Psoas muscle (tissue), 8 donors: ENCODE measurements at regions of chr2 and their contacts with region 1.

Region 1: DNA sequence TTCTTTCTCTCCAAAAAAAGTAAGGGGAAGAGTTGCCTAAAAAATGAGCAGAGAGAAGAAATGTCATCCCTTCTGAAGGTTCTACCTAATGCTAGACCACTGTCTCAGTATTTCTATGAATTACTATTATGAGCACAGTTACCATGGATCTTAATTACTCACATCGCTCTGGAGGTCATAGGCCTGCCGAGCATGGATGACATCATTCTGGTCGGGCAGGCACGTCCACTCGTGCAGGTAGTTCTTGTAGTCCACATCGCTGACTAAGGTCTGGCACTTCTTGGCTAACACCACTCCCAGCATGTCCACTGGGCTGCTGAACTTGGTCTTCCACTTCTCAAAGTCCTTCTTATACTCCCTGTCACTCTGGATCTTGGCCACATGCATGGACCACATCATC is 106.9 kb downstream of the NEB start:
- DNase-seq: no peak
- ATAC-seq: peak; percentile 51 to 68 (median 62)
- H3K4me3 ChIP-seq: no peak overlapping the region
- H3K27ac ChIP-seq: peak overlapping the region; percentile 47
- H3K4me1 ChIP-seq: peaks cover 31% of the 10 kb centered on the region
- H3K27me3 ChIP-seq: no peaks in the 10 kb centered on the region
- CTCF ChIP-seq: no peak

Region 2: DNA sequence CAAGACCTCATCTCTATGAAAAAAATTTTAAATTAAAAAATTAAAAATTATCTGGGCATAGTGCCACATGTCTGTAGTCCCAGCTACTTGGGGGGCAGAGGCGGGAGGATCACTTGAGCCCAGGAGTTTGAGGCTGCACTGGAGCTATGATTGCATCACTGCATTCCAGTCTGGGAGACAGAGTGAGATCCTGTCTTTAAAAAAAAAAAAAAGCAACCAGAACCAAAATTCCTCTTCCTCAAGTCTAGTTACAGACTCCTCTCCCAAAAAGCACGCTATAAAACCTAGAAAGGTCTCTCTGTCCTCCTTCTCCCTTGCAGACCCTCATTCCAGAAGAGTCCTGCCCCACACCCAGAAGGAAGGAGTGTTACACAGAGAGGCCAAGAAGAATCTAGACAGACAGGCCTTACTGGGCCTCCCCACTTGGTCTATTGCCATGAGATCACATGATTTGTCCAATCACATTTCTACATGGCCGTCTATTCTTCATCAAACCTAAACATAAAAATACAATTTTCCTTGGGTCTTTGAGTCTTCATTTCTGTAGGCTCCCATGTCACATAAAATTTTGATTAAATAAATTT is 246.0 kb before region 1 on chr2:
- intact Hi-C with region 1: no loop called
- DNase-seq: no peak
- ATAC-seq: no peak
- H3K4me3 ChIP-seq: no peak overlapping the region
- H3K27ac ChIP-seq: no peak overlapping the region
- H3K4me1 ChIP-seq: no peaks in the 10 kb centered on the region
- H3K27me3 ChIP-seq: no peaks in the 10 kb centered on the region
- CTCF ChIP-seq: no peak

Region 3: GRCh38 chr2:151551556-151551955 is 75.8 kb before region 1 on chr2:
- intact Hi-C with region 1: loop called in 1 of 2 experiments (anchors 5 kb)
- DNase-seq: no peak
- ATAC-seq: no peak
- H3K4me3 ChIP-seq: no peak overlapping the region
- H3K27ac ChIP-seq: peak overlapping the region; percentile 43
- H3K4me1 ChIP-seq: no peaks in the 10 kb centered on the region
- H3K27me3 ChIP-seq: no peaks in the 10 kb centered on the region
- CTCF ChIP-seq: no peak

Region 4: GRCh38 chr2:151664520-151664919 is 37.2 kb after region 1 on chr2:
- intact Hi-C with region 1: loop called in 1 of 2 experiments (anchors 5 kb)
- DNase-seq: no peak
- ATAC-seq: no peak
- H3K4me3 ChIP-seq: no peak overlapping the region
- H3K27ac ChIP-seq: peak overlapping the region; percentile 30
- H3K4me1 ChIP-seq: peaks cover 29% of the 10 kb centered on the region
- H3K27me3 ChIP-seq: no peaks in the 10 kb centered on the region
- CTCF ChIP-seq: no peak

Region 5: GRCh38 chr2:151766437-151767153 is 139.2 kb after region 1 on chr2:
- intact Hi-C with region 1: no loop called
- DNase-seq: no peak
- ATAC-seq: no peak
- H3K4me3 ChIP-seq: no peak overlapping the region
- H3K27ac ChIP-seq: peak overlapping the region; percentile 83
- H3K4me1 ChIP-seq: peaks cover 47% of the 10 kb centered on the region
- H3K27me3 ChIP-seq: no peaks in the 10 kb centered on the region
- CTCF ChIP-seq: no peak

Region 6: DNA sequence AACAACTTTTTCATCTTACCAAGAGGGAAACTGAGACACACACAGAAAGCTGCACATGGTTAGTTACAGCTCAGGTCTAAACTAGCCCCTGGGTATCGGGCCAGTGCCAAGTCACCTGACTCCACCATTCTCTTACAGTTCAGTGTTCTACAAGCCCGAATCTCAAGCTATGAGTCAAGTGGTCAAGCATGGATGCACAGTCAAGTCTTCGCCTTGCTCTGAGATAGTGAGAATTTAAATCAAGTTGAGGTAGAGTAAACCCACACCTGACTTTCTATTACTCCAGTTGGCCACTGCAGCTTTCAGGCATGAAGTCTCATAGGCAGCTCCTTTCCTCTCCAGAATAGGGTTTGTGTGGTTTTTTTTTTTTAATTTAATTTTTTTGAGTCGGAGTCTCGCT is 235.3 kb after region 1 on chr2:
- intact Hi-C with region 1: no loop called
- DNase-seq: no peak
- ATAC-seq: no peak
- H3K4me3 ChIP-seq: no peak overlapping the region
- H3K27ac ChIP-seq: no peak overlapping the region
- H3K4me1 ChIP-seq: no peaks in the 10 kb centered on the region
- H3K27me3 ChIP-seq: no peaks in the 10 kb centered on the region
- CTCF ChIP-seq: no peak